Activated naive CD4-positive, alpha-beta T cell treated with anti-CD3 and anti-CD28 coated beads, Interleukin-2, amount 10 ng/mL, durations not matched to agents 7 days and 5 days (primary cell): ENCODE measurements at regions of chr2 and their contacts with region 1.

Region 1: DNA sequence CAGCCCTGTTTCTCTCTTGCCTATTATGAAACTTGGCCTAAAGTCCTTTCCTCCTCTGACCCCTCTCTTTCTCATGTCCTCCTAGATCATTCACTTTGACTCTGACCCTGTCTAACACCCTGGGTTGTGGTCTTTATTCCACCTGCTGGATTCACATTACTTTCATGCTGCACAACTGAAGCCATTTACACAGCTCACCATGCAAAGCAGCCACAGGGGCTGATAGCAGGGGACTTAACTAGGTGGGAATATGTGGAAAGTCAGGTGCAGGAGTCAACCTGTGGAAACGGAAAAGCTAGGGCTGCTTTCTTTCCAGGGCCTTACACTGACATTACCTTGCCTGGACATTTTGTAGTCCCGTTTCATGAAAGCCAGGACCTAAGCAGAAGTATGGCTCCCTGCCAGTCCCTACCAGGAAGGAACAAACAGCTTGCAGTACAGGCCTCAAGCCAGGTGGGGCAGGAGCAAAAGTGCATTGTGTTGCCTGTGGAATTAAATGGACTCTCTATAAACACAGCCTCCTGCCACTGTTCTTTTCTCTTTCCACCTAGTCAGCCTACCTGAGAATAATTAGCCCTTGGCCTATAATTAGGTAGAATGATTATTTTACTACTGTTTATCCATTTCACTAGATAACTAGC is 11.8 kb downstream of the MAPRE3 start:
- DNase-seq: peak; percentile 34
- H3K4me3 Mint-ChIP-seq: no peak overlapping the region
- H3K27ac Mint-ChIP-seq: no peak overlapping the region
- H3K4me1 Mint-ChIP-seq: no peaks in the 10 kb centered on the region
- H3K27me3 Mint-ChIP-seq: peaks cover 33% of the 10 kb centered on the region

Region 2: DNA sequence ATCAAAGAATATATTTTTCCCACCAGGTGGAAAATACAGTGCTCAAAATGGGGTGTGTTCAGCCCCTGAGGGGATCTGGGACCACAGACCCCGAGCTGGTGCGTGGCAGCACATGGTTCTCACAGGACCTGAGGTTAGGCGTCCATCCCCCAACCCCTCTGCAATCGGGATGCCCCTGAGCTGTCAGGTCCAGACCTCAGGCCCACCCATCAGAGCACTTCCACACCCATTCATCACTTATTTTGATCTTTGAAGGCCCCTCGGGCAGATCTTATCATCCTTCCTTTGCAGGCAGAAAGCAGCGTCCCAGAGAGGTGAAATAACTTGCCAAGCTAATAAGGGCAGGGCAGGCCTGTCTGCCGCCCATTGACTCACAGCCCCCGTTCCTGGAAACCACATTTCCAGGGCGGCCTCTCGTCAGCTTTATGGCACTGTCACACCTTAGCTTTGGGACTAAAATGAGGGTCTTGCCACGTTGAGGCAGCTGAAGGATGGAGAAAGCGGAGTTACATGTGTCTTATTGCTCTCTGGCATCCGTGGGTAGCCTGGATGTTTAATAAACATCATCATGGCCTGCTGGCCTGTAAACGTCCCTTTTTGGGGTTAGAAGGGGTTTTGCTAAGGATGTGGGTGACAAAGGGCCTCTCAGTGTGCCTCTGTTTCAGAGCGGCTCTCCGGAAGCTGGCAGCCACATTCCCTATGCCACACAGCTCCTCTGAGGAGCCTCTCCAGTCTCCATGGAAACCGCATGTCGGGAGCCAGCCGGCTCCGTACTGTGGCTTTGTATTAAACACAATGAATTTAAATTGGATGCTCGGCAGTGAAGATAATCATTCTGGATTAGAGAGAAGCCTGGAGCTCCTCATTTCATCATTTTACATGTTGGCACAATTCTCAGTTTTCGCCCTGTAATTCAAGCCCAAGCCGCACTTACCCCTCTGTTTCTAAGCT is 70.0 kb before region 1 on chr2:
- CTCF ChIA-PET with region 1: no interaction called
- DNase-seq: no peak
- H3K4me3 Mint-ChIP-seq: no peak overlapping the region
- H3K27ac Mint-ChIP-seq: no peak overlapping the region
- H3K4me1 Mint-ChIP-seq: no peaks in the 10 kb centered on the region
- H3K27me3 Mint-ChIP-seq: peaks cover 5% of the 10 kb centered on the region

Region 3: DNA sequence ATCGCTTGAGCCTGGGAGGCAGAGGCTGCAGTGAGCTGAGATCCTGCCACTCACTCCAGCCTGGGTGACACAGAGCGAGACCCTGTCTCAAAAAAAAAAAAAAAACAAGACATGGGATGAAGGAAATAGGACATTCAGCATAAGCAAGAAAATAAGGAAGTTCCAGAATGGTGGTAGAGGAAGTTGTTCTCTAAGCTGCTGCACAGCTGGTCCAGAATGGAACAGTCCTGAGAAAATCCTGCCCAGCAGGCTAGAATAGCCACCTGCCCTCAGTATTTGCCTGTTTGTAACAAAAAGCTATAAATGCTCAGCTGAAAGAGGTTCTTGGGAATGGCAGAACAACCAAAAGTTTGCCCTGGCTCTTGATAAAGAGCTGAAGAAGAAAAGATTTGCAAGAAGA is 22.9 kb before region 1 on chr2:
- CTCF ChIA-PET with region 1: interaction called, 14 read pairs
- DNase-seq: no peak
- H3K4me3 Mint-ChIP-seq: no peak overlapping the region
- H3K27ac Mint-ChIP-seq: peak overlapping the region; percentile 4
- H3K4me1 Mint-ChIP-seq: no peaks in the 10 kb centered on the region
- H3K27me3 Mint-ChIP-seq: peaks cover 62% of the 10 kb centered on the region

Region 4: GRCh38 chr2:26964446-26965130 is 17.6 kb before region 1 on chr2:
- CTCF ChIA-PET with region 1: interaction called, 14 read pairs
- DNase-seq: no peak
- H3K4me3 Mint-ChIP-seq: no peak overlapping the region
- H3K27ac Mint-ChIP-seq: no peak overlapping the region
- H3K4me1 Mint-ChIP-seq: peaks cover 6% of the 10 kb centered on the region
- H3K27me3 Mint-ChIP-seq: peaks cover 50% of the 10 kb centered on the region

Region 5: GRCh38 chr2:26993768-26994167 is 11.5 kb after region 1 on chr2:
- CTCF ChIA-PET with region 1: no interaction called
- DNase-seq: no peak
- H3K4me3 Mint-ChIP-seq: no peak overlapping the region
- H3K27ac Mint-ChIP-seq: no peak overlapping the region
- H3K4me1 Mint-ChIP-seq: no peaks in the 10 kb centered on the region
- H3K27me3 Mint-ChIP-seq: peaks cover 6% of the 10 kb centered on the region